Activated CD4-positive, alpha-beta T cell treated with anti-CD3 and anti-CD28 coated beads, Interleukin-2, amount 10 ng/mL, durations not matched to agents 24 days and 14 days (primary cell): ENCODE measurements at regions of chr10 and their contacts with region 1.

Region 1: DNA sequence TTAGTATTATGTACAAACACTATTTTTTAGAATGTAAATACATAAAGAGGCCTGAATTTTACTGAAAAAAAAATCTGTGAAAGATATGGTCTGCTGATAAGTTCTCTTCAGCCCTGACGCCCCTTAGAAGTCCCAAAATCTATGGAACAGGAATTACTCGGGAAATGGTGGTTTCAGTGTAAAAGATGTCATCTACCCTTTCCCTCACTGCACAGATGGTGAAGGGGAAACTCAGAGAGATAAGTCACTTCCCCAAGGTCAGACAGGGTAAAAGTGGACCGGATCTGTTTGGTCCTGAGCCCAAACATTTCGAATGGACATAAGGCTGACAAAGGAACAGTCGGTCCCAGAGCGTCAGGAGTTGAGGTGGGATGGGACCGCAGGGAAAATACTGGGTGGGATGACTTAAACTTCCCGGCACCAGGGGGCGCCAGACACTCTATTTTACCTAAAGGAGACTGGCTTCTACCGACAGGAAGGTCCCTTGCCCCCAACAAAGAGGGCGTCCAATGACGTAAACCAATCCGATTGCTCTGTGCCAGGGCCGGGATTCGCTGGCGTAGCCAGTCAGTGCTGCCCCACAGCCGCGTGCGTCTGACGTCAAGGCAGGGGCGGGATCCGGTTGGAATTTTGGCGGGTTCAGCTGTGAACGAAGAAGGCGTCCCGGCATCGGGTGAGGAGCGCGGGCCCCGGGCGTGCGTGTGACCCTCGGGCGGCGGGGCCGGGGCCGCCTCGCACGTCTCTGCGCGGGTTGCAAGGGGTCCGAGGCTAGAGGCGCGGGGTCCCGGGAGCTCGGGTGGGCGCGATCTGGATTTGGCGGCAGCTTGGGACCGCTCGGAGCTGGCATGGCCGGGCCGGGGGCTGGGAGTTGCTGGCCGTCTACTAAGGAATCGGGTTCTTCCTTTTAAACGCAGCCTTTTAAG is at the start of gene MCM10:
- DNase-seq: peak; percentile 100
- H3K4me3 Mint-ChIP-seq: peak within 1 kb of the TSS; percentile 98
- H3K27ac Mint-ChIP-seq: peak within 1 kb of the TSS; percentile 89
- H3K4me1 Mint-ChIP-seq: peaks cover 25% of the 10 kb centered on the region
- H3K27me3 Mint-ChIP-seq: no peaks in the 10 kb centered on the region
- total RNA-seq, gene MCM10: 107 and 112 TPM in 2 replicates

Region 2: GRCh38 chr10:13099666-13100348 is 61.4 kb before region 1 on chr10 and contains the start of gene OPTN:
- intact Hi-C with region 1: loop called (anchors 1 kb)
- DNase-seq: peak; percentile 93
- H3K4me3 Mint-ChIP-seq: peak within 1 kb of the TSS; percentile 92
- H3K27ac Mint-ChIP-seq: peak within 1 kb of the TSS; percentile 92
- H3K4me1 Mint-ChIP-seq: peaks cover 46% of the 10 kb centered on the region
- H3K27me3 Mint-ChIP-seq: no peaks in the 10 kb centered on the region
- total RNA-seq, gene OPTN: 39.5 and 43.6 TPM in 2 replicates

Region 3: GRCh38 chr10:13120786-13121499 is 40.3 kb before region 1 on chr10:
- intact Hi-C with region 1: no loop called
- DNase-seq: no peak
- H3K4me3 Mint-ChIP-seq: no peak overlapping the region
- H3K27ac Mint-ChIP-seq: no peak overlapping the region
- H3K4me1 Mint-ChIP-seq: peaks cover 14% of the 10 kb centered on the region
- H3K27me3 Mint-ChIP-seq: no peaks in the 10 kb centered on the region

Region 4: DNA sequence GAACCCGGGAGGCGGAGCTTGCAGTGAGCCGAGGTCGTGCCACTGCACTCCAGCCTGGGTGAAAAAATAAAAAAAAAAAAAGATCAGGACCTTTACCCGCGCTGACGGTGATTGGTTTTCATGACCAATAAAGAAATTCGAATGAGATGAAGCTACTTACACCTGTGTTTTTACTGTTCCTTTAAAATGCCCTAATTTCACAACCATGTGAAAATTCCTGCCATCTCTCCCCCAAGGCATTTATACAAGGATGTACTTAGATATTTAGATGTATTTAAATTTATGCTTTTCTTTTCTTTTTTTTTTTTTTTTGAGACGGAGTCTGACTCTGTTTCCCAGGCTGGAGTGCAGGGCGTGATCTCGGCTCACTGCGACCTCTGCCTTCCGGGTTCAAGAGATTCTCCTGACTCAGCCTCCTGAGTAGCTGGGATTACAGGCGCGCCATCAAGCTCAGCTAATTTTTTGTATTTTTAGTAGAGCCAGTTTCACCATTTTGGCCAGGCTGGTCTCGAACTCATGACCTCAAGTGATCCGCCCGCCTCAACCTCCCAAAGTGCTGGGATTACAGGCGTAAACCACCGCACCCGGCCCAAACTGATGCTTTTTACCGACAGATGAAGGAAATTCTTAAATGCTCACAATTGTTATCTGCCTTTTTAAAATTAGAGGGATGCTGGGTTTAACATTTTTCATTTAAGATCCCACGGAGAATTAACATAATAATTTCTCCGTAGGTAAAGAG is 141.8 kb after region 1 on chr10:
- intact Hi-C with region 1: loop called (anchors 1 kb)
- DNase-seq: no peak
- H3K4me3 Mint-ChIP-seq: peak overlapping the region; percentile 82
- H3K27ac Mint-ChIP-seq: peak overlapping the region; percentile 98
- H3K4me1 Mint-ChIP-seq: peaks cover 22% of the 10 kb centered on the region
- H3K27me3 Mint-ChIP-seq: no peaks in the 10 kb centered on the region

Region 5: GRCh38 chr10:13440185-13441061 is 279.2 kb after region 1 on chr10:
- intact Hi-C with region 1: loop called (anchors 1 kb)
- DNase-seq: peak; percentile 88
- H3K4me3 Mint-ChIP-seq: peak overlapping the region; percentile 55
- H3K27ac Mint-ChIP-seq: no peak overlapping the region
- H3K4me1 Mint-ChIP-seq: peaks cover 7% of the 10 kb centered on the region
- H3K27me3 Mint-ChIP-seq: peaks cover 53% of the 10 kb centered on the region